ENCODE measurements at regions of chr4 and their contacts with region 1.

Region 1: DNA sequence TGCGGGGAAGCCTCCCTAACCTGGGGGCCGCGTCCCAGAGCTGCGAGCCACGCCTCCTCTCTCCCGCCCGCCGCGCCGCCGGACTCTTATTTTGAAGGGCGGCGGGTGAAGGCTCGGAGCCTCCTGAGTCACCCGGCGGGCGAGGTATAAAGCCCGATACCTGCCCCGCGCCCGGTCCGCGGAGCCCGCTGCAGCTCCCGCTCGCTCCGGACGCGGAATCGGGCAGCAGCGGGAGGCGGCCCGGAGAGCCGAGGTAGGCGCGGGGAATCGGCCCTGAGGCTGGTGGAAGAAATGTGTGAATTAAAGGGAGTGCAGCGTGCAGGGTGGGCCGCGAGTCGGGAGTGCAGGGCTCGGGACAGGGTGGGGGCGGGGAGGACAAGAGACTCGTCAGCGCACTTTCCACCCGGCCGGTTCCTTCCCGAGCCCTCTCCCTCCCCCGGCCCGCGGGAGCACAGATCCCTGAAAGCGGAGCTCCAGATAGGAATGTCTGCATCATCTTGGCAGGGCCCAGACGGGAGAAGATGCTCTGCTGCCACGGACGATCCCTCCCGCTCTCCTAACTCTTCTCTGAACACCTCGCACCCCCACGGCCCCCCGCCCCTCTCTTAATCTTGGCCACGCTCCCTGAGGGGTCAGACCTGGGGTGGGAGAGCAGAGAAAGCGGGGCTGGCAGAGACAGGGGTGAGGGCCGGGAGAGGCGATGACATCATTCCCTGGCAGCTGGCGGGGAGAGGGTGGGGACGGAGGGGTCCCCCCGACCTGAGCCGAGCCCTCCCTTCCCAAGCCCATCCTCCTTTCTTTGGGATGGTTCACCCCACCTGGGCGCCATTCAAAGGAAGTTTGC is 177.9 kb downstream of the CBR4 start:
- DNase-seq: peak; percentile 78
- H3K4me3 ChIP-seq: peak overlapping the region; percentile 72 to 88 (median 81)
- H3K27ac ChIP-seq: peak overlapping the region; percentile 73
- H3K4me1 ChIP-seq: peaks cover 17% of the 10 kb centered on the region
- H3K27me3 ChIP-seq: no peaks in the 10 kb centered on the region
- CTCF ChIP-seq: no peak
- POLR2A ChIP-seq: peak; percentile 94

Region 2: GRCh38 chr4:168710353-168710946 is 121.7 kb before region 1 on chr4:
- CTCF ChIA-PET with region 1: interaction called, 6 read pairs
- POLR2A ChIA-PET with region 1: no interaction called
- dilution Hi-C with region 1: no loop called
- intact Hi-C with region 1: loop called (anchors 2 kb)
- DNase-seq: peak; percentile 82
- H3K4me3 ChIP-seq: no peak overlapping the region
- H3K27ac ChIP-seq: no peak overlapping the region
- H3K4me1 ChIP-seq: peaks cover 12% of the 10 kb centered on the region
- H3K27me3 ChIP-seq: no peaks in the 10 kb centered on the region
- CTCF ChIP-seq: peak; percentile 36 to 48
- POLR2A ChIP-seq: no peak

Region 3: DNA sequence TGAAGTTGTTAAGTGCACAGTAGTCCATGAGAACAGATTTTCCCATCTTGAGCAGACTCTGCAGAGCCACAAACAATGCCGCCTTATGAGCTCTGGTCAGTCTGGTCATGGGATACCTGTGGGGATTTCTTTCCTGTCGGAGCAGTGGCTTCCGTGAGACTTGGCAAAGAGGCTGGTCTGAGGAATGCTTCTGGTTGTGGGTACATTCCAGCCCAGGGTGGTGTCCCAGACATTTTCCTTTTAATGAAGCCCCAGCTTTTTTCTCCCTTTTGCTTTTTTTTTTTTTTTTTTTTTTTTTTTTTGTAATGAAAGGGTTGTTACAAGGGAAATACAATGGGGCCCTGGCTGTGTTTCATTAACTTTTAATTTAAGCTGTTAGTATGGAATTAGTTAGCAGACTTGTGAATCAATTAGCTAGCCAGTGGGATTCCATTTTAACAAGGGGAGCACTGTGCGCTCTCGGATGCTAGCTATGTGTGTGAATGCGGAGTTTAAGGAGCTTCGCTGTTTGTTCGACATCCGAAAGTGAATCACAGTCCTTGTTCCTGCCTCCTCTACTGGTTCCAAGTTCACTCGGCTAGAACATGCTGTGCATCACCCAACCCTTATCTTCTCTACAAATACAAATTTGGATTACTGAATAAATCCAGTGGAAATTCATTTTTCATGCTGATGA is 47.2 kb before region 1 on chr4:
- CTCF ChIA-PET with region 1: no interaction called
- POLR2A ChIA-PET with region 1: no interaction called
- dilution Hi-C with region 1: no loop called
- intact Hi-C with region 1: no loop called
- DNase-seq: no peak
- H3K4me3 ChIP-seq: no peak overlapping the region
- H3K27ac ChIP-seq: no peak overlapping the region
- H3K4me1 ChIP-seq: no peaks in the 10 kb centered on the region
- H3K27me3 ChIP-seq: no peaks in the 10 kb centered on the region
- CTCF ChIP-seq: no peak
- POLR2A ChIP-seq: no peak

Region 4: GRCh38 chr4:168815379-168816345 is 16.5 kb before region 1 on chr4:
- CTCF ChIA-PET with region 1: interaction called, 21 read pairs
- POLR2A ChIA-PET with region 1: interaction called, 50 read pairs
- dilution Hi-C with region 1: no loop called
- intact Hi-C with region 1: loop called (anchors 1 kb)
- DNase-seq: peak; percentile 75
- H3K4me3 ChIP-seq: no peak overlapping the region
- H3K27ac ChIP-seq: no peak overlapping the region
- H3K4me1 ChIP-seq: peaks cover 6% of the 10 kb centered on the region
- H3K27me3 ChIP-seq: no peaks in the 10 kb centered on the region
- CTCF ChIP-seq: no peak
- POLR2A ChIP-seq: no peak

Region 5: GRCh38 chr4:168847771-168848511 is 15.8 kb after region 1 on chr4:
- CTCF ChIA-PET with region 1: interaction called, 8 read pairs
- POLR2A ChIA-PET with region 1: interaction called, 8 read pairs
- dilution Hi-C with region 1: no loop called
- intact Hi-C with region 1: loop called (anchors 1 kb)
- DNase-seq: peak; percentile 37
- H3K4me3 ChIP-seq: peak overlapping the region in 1 of 3 experiments; percentile 9
- H3K27ac ChIP-seq: peak overlapping the region; percentile 21
- H3K4me1 ChIP-seq: peaks cover 16% of the 10 kb centered on the region
- H3K27me3 ChIP-seq: no peaks in the 10 kb centered on the region
- CTCF ChIP-seq: no peak
- POLR2A ChIP-seq: no peak

Region 6: DNA sequence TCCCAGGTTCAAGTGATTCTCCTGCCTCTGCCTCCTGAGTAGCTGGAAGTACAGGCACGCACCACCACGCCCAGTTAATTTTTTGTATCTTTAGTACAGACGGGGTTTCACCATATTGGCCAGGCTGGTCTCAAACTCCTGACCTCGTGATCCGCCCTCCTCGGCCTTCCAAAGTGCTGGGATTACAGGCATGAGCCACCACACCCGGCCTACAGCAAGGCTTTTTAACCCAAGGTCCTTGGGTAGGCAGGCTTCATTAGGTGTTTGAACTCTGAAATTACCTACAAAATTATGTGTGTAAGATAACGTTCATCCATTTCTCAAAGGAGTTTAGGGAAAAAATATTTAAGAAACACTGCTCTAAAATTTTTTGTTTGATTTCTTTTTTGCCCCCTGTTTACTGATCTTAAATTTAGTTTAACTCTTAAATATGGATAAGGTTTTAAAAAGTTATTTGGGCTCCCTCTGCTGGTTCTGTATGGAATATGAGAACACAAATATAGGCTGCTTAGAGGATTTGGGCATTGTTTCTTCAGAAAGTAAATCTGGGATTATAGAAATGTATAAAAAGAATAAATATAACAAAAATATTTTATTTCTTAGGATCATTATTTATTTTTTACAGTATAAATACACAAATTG is 85.1 kb after region 1 on chr4:
- CTCF ChIA-PET with region 1: interaction called, 6 read pairs
- POLR2A ChIA-PET with region 1: interaction called, 9 read pairs
- dilution Hi-C with region 1: no loop called
- intact Hi-C with region 1: loop called (anchors 2 kb)
- DNase-seq: peak; percentile 65
- H3K4me3 ChIP-seq: no peak overlapping the region
- H3K27ac ChIP-seq: no peak overlapping the region
- H3K4me1 ChIP-seq: no peaks in the 10 kb centered on the region
- H3K27me3 ChIP-seq: no peaks in the 10 kb centered on the region
- CTCF ChIP-seq: peak in 1 of 2 donors; percentile 25
- POLR2A ChIP-seq: no peak

Region 7: GRCh38 chr4:169099771-169100180 is 267.6 kb after region 1 on chr4:
- CTCF ChIA-PET with region 1: no interaction called
- POLR2A ChIA-PET with region 1: no interaction called
- dilution Hi-C with region 1: no loop called
- intact Hi-C with region 1: no loop called
- DNase-seq: peak; percentile 42
- H3K4me3 ChIP-seq: no peak overlapping the region
- H3K27ac ChIP-seq: peak overlapping the region; percentile 30
- H3K4me1 ChIP-seq: peaks cover 36% of the 10 kb centered on the region
- H3K27me3 ChIP-seq: no peaks in the 10 kb centered on the region
- CTCF ChIP-seq: no peak
- POLR2A ChIP-seq: no peak